PC-3 (cell line): ENCODE measurements at regions of chr1 and their contacts with region 1.

Region 1: GRCh38 chr1:247936415-247936814 is 11.7 kb downstream of the OR2AJ1 start:
- DNase-seq: peak; percentile 19
- ATAC-seq: no peak
- H3K4me3 ChIP-seq: no peak overlapping the region; the same call in 1 of the 2 replicates
- H3K27ac ChIP-seq: no peak overlapping the region
- H3K4me1 ChIP-seq: peaks cover 4% of the 10 kb centered on the region; the same call in 1 of the 2 replicates
- H3K27me3 ChIP-seq: no peaks in the 10 kb centered on the region
- CTCF ChIP-seq: no peak

Region 2: GRCh38 chr1:248045209-248045608 is 108.8 kb after region 1 on chr1:
- CTCF ChIA-PET with region 1: no interaction called
- POLR2A ChIA-PET with region 1: no interaction called
- intact Hi-C with region 1: loop called (anchors 5 kb)
- DNase-seq: no peak
- ATAC-seq: no peak
- H3K4me3 ChIP-seq: no peak overlapping the region
- H3K27ac ChIP-seq: no peak overlapping the region
- H3K4me1 ChIP-seq: no peaks in the 10 kb centered on the region
- H3K27me3 ChIP-seq: no peaks in the 10 kb centered on the region
- CTCF ChIP-seq: no peak

Region 3: GRCh38 chr1:248243204-248243603 is 306.8 kb after region 1 on chr1:
- CTCF ChIA-PET with region 1: interaction called, 4 read pairs
- POLR2A ChIA-PET with region 1: no interaction called
- intact Hi-C with region 1: loop called (anchors 5 kb)
- DNase-seq: peak; percentile 86
- ATAC-seq: peak; percentile 85
- H3K4me3 ChIP-seq: peak overlapping the region; percentile 37; the same call in 1 of the 2 replicates
- H3K27ac ChIP-seq: no peak overlapping the region
- H3K4me1 ChIP-seq: no peaks in the 10 kb centered on the region
- H3K27me3 ChIP-seq: peaks cover 5% of the 10 kb centered on the region; the same call in 1 of the 2 replicates
- CTCF ChIP-seq: peak; percentile 94

Region 4: GRCh38 chr1:248268178-248268577 is 331.8 kb after region 1 on chr1:
- CTCF ChIA-PET with region 1: interaction called, 4 read pairs
- POLR2A ChIA-PET with region 1: no interaction called
- intact Hi-C with region 1: loop called (anchors 1 kb)
- DNase-seq: peak; percentile 52
- ATAC-seq: peak; percentile 83
- H3K4me3 ChIP-seq: no peak overlapping the region
- H3K27ac ChIP-seq: no peak overlapping the region
- H3K4me1 ChIP-seq: no peaks in the 10 kb centered on the region
- H3K27me3 ChIP-seq: no peaks in the 10 kb centered on the region
- CTCF ChIP-seq: peak; percentile 39; the same call in 1 of the 2 replicates

Region 5: DNA sequence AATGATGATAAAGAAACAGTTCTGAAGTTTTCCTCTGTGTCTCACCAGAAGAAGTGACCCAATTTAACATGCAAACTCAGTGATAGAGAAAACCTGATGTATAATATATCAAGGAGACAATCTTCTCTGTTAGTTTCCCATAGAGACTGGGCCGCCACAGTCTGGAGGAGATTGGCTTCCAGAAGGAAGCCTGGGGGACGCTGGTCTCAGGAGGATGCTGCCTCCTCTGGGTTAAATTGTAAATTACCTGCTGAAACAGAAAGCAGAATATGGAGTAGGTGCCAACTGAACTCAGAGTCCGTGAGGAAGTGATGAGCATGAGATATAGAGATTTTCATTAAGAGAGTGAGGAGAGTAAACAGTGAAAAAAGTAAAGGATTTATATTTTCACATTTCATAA is 750.4 kb after region 1 on chr1:
- CTCF ChIA-PET with region 1: no interaction called
- POLR2A ChIA-PET with region 1: no interaction called
- intact Hi-C with region 1: loop called (anchors 5 kb)
- DNase-seq: peak; percentile 66
- ATAC-seq: peak; percentile 87
- H3K4me3 ChIP-seq: no peak overlapping the region
- H3K27ac ChIP-seq: no peak overlapping the region
- H3K4me1 ChIP-seq: peaks cover 11% of the 10 kb centered on the region
- H3K27me3 ChIP-seq: peaks cover 4% of the 10 kb centered on the region; the same call in 1 of the 2 replicates
- CTCF ChIP-seq: peak; percentile 84